PC-9 (cell line): ENCODE measurements at regions of chr2 and their contacts with region 1.

Region 1: DNA sequence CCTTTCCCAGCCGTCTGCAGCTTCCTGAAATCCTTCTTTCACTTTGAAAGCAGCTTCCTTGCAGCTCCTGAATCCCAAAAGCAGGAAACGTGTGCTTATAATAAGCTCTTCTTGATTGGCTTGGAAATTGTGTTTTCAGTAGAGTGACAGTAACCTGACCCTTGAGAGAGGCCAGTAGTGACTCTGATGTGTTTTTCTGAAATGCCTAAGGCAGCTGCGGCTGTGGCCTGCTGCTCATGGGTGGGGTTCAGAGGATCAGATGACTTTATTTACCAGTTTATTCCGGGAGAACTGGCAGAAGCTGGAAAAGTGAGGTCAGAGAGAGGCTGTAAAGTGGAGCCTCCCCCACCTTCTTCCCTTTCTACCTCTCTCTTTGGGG is 31.9 kb upstream of the RPIA start:
- DNase-seq: peak; percentile 72 to 91
- H3K4me3 ChIP-seq: peak overlapping the region; percentile 34; the same call in 1 of the 2 replicates
- H3K27ac ChIP-seq: peak overlapping the region; percentile 70
- H3K4me1 ChIP-seq: peaks cover 39% of the 10 kb centered on the region
- H3K27me3 ChIP-seq: no peaks in the 10 kb centered on the region
- CTCF ChIP-seq: no peak

Region 2: DNA sequence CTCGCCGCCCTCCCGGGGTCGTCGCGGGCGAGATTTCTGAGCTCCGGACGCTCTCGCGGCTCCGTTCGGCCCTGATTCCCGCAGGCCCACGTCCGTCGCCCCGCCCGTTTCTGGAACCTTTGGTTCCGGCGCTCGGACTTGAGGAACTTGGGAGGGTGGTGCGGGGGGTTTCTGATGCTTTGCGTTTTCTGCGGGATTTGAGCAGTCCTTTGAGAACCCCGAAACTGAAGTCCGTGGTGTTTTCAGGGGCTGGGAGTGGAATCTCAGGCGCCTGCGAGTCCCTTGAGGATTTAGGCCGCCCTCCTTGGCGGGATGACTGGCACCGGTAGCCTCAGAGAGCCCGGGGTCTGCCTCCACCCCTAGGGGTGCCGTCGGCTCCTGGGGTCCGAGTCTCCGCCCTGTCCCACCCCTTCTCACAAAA is 489.0 kb before region 1 on chr2:
- CTCF ChIA-PET with region 1: interaction called, 20 read pairs
- POLR2A ChIA-PET with region 1: no interaction called
- intact Hi-C with region 1: no loop called
- DNase-seq: no peak
- H3K4me3 ChIP-seq: peak overlapping the region; percentile 81
- H3K27ac ChIP-seq: no peak overlapping the region
- H3K4me1 ChIP-seq: 0 out of 2 replicates have a peak, but pooled peaks cover 5% of the 10 kb centered on the region
- H3K27me3 ChIP-seq: no peaks in the 10 kb centered on the region; the same call in 1 of the 2 replicates
- CTCF ChIP-seq: no peak

Region 3: DNA sequence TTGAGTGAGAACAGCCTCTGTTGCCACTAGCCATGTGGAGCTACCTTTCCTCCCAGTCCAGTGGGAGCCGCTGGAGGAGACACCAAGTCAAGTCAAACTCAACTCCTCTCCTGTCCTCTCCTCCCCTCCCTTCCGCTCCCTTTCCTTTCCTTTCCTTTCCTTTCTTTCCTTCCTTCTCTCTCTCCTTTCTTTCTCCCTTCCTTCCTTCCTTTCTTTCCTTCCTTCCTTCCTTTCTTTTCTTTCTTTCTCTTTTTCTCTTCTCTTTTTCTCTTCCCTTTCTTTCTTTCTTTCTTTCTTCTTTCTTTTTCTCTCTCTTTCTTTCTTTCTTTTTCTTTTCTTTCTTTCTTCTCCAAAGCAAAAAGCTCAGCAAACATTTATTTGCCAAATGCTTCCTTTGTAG is 444.9 kb before region 1 on chr2:
- CTCF ChIA-PET with region 1: no interaction called
- POLR2A ChIA-PET with region 1: interaction called, 48 read pairs
- intact Hi-C with region 1: no loop called
- DNase-seq: no peak
- H3K4me3 ChIP-seq: no peak overlapping the region
- H3K27ac ChIP-seq: no peak overlapping the region
- H3K4me1 ChIP-seq: no peaks in the 10 kb centered on the region
- H3K27me3 ChIP-seq: peaks cover 69% of the 10 kb centered on the region
- CTCF ChIP-seq: no peak

Region 4: GRCh38 chr2:88600038-88600465 is 59.5 kb before region 1 on chr2:
- CTCF ChIA-PET with region 1: no interaction called
- POLR2A ChIA-PET with region 1: interaction called, 12 read pairs
- intact Hi-C with region 1: loop called (anchors 1 kb)
- DNase-seq: peak; percentile 57 to 98
- H3K4me3 ChIP-seq: no peak overlapping the region
- H3K27ac ChIP-seq: peak overlapping the region; percentile 77
- H3K4me1 ChIP-seq: peaks cover 23% of the 10 kb centered on the region
- H3K27me3 ChIP-seq: no peaks in the 10 kb centered on the region
- CTCF ChIP-seq: no peak

Region 5: GRCh38 chr2:88641330-88641729 is 18.2 kb before region 1 on chr2:
- CTCF ChIA-PET with region 1: interaction called, 15 read pairs
- POLR2A ChIA-PET with region 1: no interaction called
- intact Hi-C with region 1: no loop called
- DNase-seq: no peak
- H3K4me3 ChIP-seq: no peak overlapping the region
- H3K27ac ChIP-seq: no peak overlapping the region
- H3K4me1 ChIP-seq: peaks cover 38% of the 10 kb centered on the region
- H3K27me3 ChIP-seq: no peaks in the 10 kb centered on the region
- CTCF ChIP-seq: no peak